Dorsolateral prefrontal cortex (tissue), 120 donors: ENCODE measurements at regions of chr18 and their contacts with region 1.

Region 1: DNA sequence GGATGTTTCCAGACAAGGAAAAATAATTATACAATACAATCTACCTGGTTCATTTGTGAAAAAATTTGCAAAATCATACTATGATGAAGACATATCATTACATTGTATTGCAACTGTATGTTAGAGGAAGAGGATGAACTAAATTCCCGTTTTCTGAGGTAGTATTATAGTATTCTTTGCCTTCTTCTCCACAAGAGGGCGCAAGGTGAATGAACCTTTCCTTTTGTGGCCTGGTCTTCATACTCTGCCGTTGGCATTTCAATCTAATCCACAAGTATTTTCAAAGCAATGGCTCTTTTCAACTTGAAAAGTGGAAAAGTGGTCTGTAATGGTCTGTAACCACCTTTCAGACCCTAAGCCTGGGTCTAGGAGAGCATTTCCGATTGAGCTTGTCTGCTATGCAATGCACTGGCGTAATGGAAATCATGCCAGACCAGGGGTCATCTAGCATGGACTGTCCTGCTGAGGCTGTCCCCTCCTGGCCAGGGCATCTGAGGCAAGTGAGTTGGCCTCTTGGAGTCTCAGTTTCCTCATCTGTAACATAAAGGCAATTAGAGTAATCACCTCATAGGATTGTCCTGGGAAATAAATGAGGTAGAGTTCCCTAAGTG is 30.8 kb upstream of the ZNF396 start:
- DNase-seq: peak in 2 of 10 donors; percentile 31 to 37
- H3K4me3 ChIP-seq: no peak overlapping the region
- H3K27ac ChIP-seq: no peak overlapping the region
- H3K27me3 ChIP-seq: no peaks in the 10 kb centered on the region
- CTCF ChIP-seq: peak; percentile 60 to 91 (median 79)

Region 2: DNA sequence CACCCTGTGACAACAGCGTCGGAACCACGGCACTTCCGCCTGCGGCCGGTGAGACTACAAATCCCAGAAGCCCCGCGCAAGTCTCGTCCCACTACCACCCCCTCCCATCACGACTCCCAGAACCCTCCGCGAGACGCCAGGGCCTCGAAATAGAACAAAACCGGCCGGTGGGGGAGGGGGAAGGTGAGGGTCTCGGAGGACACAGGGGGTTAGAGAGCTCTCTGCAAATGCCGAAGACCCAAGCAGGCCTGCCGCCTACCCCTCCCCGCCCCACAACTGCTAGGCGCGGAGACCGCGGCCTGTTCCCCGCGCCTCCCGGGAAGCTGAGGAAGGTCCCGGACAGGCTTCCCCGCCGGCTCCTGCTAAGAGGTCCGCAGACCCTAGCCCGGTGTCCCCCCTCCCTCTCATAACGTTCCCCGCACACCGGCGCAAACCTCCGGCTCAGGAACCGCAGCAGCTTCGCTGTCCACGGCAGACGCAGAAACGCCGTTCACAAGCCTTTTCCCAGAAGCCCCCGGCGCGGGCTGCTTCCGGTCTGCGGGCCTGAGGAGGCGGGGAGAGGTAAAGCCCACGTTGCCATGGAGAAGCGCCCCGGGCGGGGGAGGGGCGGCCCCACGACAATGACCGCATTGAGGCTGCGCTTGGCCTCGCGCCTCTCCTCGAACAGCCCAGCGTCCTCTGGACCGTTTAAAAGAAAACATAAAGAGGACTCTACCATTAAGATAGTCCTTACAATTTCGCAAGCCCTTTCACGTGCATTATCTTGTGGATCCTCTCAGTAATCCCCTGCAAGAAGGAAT is 63.8 kb before region 1 on chr18 and contains the start of gene ZNF24:
- intact Hi-C with region 1: no loop called
- DNase-seq: peak; percentile 95 to 98 (median 97)
- H3K4me3 ChIP-seq: peak within 1 kb of the TSS; percentile 70 to 100 (median 94)
- H3K27ac ChIP-seq: peak within 1 kb of the TSS; percentile 93 to 100 (median 100)
- H3K27me3 ChIP-seq: no peaks in the 10 kb centered on the region
- CTCF ChIP-seq: peak in 5 of 56 donors; percentile 7 to 25 (median 15)
- total RNA-seq, gene ZNF24: 49.1 to 124 (median 68.9) TPM

Region 3: GRCh38 chr18:35497370-35498197 is 89.6 kb after region 1 on chr18 and contains the start of gene INO80C:
- intact Hi-C with region 1: loop called in 1 of 2 experiments (anchors 5 kb)
- DNase-seq: peak; percentile 73 to 91 (median 88)
- H3K4me3 ChIP-seq: peak within 1 kb of the TSS; percentile 52 to 92 (median 76)
- H3K27ac ChIP-seq: peak within 1 kb of the TSS; percentile 75 to 99 (median 94)
- H3K27me3 ChIP-seq: no peaks in the 10 kb centered on the region
- CTCF ChIP-seq: peak in 34 of 56 donors; percentile 5 to 51 (median 20)
- total RNA-seq, gene INO80C: 13.8 to 40.5 (median 27.1) TPM

Region 4: DNA sequence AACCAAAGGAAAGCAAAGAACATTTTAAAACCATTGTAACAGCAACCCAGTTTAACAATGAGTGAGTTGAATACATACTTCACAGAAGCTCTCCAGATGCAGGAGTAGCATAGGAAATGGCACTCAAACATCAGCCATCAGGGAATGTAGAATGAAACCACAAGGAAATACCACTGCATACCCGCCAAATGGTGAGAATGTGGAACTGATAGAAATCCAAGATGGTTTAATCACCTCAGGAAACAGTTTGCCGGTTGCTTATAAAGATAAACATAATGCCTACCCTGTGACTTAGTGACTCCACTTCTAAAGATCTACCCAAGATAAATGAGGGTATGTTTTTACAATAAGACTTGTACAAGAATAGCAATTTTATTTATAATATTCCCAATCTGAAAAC is 305.6 kb after region 1 on chr18:
- intact Hi-C with region 1: no loop called
- DNase-seq: no peak
- H3K4me3 ChIP-seq: no peak overlapping the region
- H3K27ac ChIP-seq: no peak overlapping the region
- H3K27me3 ChIP-seq: no peaks in the 10 kb centered on the region
- CTCF ChIP-seq: no peak